GM12878 (cell line): ENCODE measurements at regions of chr5 and their contacts with region 1.

Region 1: GRCh38 chr5:141475625-141476131 is at the start of gene PCDHGC3:
- DNase-seq: peak; percentile 40
- ATAC-seq: peak; percentile 97
- H3K4me3 ChIP-seq: peak within 1 kb of the TSS; percentile 77
- H3K27ac ChIP-seq: no peak within 1 kb of the TSS; the same call in 1 of the 2 replicates
- H3K4me1 ChIP-seq: peaks cover 17% of the 10 kb centered on the region
- H3K27me3 ChIP-seq: no peaks in the 10 kb centered on the region; a peak in 1 of 4 replicates
- CTCF ChIP-seq: peak; percentile 49 to 86 (median 65); a peak in 5 of 6 replicates
- EP300 ChIP-seq: no peak
- POLR2A ChIP-seq: no peak
- RAD21 ChIP-seq: peak; percentile 77
- polyA plus RNA-seq, gene PCDHGC3: 0.53 to 0.60 TPM

Region 2: DNA sequence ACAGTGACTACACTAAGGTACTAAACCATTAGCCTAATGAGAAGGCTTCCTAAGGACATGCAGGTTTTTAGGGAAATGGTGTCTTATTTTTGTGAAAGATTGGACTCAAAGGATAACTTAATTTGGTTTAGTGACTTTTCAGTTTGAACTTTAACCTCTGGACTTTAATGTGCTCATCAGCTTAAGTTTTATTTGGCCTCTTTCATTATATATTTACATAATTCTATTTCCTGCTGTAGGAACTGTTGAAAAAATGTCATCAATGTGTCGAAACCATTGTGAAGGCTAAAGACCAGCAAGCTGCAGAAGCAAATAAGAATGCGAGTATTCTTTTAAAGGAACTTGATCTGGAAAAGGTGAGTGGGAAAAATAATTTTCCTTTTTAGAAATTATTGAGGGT is 962.6 kb before region 1 on chr5:
- CTCF ChIA-PET with region 1: no interaction called
- POLR2A ChIA-PET with region 1: no interaction called
- RAD21 ChIA-PET with region 1: no interaction called
- SMC1A ChIA-PET with region 1: no interaction called
- in situ Hi-C with region 1: no loop called
- intact Hi-C with region 1: no loop called
- DNase-seq: no peak
- ATAC-seq: no peak
- H3K4me3 ChIP-seq: no peak overlapping the region
- H3K27ac ChIP-seq: no peak overlapping the region
- H3K4me1 ChIP-seq: no peaks in the 10 kb centered on the region
- H3K27me3 ChIP-seq: no peaks in the 10 kb centered on the region
- CTCF ChIP-seq: no peak
- EP300 ChIP-seq: no peak
- POLR2A ChIP-seq: no peak
- RAD21 ChIP-seq: no peak

Region 3: DNA sequence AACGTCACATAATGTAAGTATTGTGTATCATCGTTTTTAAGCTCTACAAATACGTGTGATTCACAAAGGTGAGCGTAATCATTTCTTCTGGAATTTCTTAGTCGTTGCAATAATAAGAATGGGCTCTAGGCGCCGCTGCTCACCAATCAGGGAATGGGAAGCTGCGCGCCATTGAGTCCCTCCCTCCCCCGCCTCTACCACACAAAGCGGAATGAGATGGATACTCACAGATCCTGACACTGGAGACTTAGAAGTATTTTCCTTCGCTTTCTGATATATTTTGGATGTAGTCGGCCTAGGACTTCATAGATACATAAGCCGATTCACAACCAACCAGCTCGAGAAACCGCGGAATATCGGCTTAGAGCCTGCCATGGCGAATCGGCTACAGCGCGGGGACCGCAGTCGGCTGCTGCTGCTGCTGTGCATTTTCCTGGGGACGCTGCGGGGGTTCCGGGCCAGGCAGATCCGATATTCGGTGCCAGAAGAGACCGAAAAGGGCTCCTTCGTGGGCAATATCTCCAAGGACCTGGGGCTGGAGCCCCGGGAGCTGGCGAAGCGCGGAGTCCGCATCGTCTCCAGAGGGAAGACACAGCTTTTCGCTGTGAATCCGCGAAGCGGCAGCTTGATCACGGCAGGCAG is 54.7 kb before region 1 on chr5 and contains the start of gene PCDHGA11:
- CTCF ChIA-PET with region 1: interaction called, 31 read pairs
- POLR2A ChIA-PET with region 1: no interaction called
- RAD21 ChIA-PET with region 1: interaction called, 27 read pairs
- SMC1A ChIA-PET with region 1: interaction called, 16 read pairs
- in situ Hi-C with region 1: no loop called
- intact Hi-C with region 1: loop called (anchors 2 kb)
- DNase-seq: peak; percentile 37
- ATAC-seq: peak; percentile 77
- H3K4me3 ChIP-seq: peak within 1 kb of the TSS; percentile 76
- H3K27ac ChIP-seq: no peak within 1 kb of the TSS
- H3K4me1 ChIP-seq: peaks cover 4% of the 10 kb centered on the region; the same call in 1 of the 2 replicates
- H3K27me3 ChIP-seq: no peaks in the 10 kb centered on the region; a peak in 1 of 4 replicates
- CTCF ChIP-seq: peak; percentile 83 to 89 (median 89)
- EP300 ChIP-seq: no peak
- POLR2A ChIP-seq: no peak
- RAD21 ChIP-seq: peak; percentile 82
- polyA plus RNA-seq, gene PCDHGA11: 0.21 to 0.31 TPM

Region 4: DNA sequence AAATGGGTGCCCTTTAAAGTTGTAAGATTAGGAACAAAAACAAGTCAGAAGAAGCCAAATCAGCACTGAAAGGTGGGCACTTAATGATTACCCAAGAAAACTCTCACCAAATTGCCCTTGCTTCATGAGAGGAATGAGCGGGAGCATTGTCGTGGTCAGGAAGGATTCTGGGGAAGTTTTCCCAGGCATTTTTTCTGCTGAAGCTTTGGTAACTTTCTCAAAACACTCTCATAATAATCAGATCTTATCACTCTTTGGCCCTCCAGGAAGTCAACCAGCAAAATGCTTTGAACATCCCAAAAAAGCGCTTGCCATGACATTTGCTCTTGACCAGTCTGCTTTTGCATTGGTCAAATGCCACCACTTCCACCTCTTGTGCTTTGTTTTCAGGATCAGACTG is 10.3 kb before region 1 on chr5:
- CTCF ChIA-PET with region 1: interaction called, 12 read pairs
- POLR2A ChIA-PET with region 1: no interaction called
- RAD21 ChIA-PET with region 1: interaction called, 17 read pairs
- SMC1A ChIA-PET with region 1: interaction called, 19 read pairs
- in situ Hi-C with region 1: no loop called
- intact Hi-C with region 1: no loop called
- DNase-seq: no peak
- ATAC-seq: no peak
- H3K4me3 ChIP-seq: no peak overlapping the region
- H3K27ac ChIP-seq: no peak overlapping the region
- H3K4me1 ChIP-seq: no peaks in the 10 kb centered on the region
- H3K27me3 ChIP-seq: no peaks in the 10 kb centered on the region
- CTCF ChIP-seq: no peak
- EP300 ChIP-seq: no peak
- POLR2A ChIP-seq: no peak
- RAD21 ChIP-seq: no peak

Region 5: GRCh38 chr5:141504216-141504615 is 28.5 kb after region 1 on chr5:
- CTCF ChIA-PET with region 1: interaction called, 213 read pairs
- POLR2A ChIA-PET with region 1: interaction called, 4 read pairs
- RAD21 ChIA-PET with region 1: interaction called, 109 read pairs
- SMC1A ChIA-PET with region 1: interaction called, 117 read pairs
- in situ Hi-C with region 1: no loop called
- intact Hi-C with region 1: no loop called
- DNase-seq: no peak
- ATAC-seq: no peak
- H3K4me3 ChIP-seq: no peak overlapping the region
- H3K27ac ChIP-seq: no peak overlapping the region
- H3K4me1 ChIP-seq: peaks cover 42% of the 10 kb centered on the region
- H3K27me3 ChIP-seq: no peaks in the 10 kb centered on the region
- CTCF ChIP-seq: no peak
- EP300 ChIP-seq: no peak
- POLR2A ChIP-seq: no peak
- RAD21 ChIP-seq: no peak

Region 6: DNA sequence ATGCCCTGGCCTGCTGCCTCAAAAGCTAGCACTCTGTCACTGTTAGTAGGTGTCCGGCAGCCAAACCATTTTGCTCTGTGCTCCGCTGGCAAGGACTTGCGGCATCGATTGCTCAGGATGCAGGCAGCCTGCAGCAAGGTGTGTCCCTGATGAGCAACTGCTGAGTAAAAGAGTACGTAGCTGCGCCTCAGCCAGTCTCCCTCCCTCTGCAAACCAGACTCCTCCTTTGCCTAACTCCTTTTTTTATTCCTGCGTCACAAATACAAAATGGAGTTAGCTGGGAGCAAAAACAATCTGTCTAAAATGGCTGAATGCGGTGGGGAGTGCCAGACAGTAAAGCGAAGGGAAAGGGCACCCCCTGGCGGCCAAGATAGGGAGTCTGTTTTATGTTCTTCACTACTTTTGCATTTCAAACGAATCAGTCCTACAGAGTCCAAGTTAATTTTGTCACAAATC is 82.0 kb after region 1 on chr5:
- CTCF ChIA-PET with region 1: interaction called, 71 read pairs
- POLR2A ChIA-PET with region 1: interaction called, 3 read pairs
- RAD21 ChIA-PET with region 1: interaction called, 51 read pairs
- SMC1A ChIA-PET with region 1: interaction called, 44 read pairs
- in situ Hi-C with region 1: no loop called
- intact Hi-C with region 1: loop called (anchors 2 kb)
- DNase-seq: peak; percentile 43
- ATAC-seq: peak; percentile 96
- H3K4me3 ChIP-seq: no peak overlapping the region
- H3K27ac ChIP-seq: peak overlapping the region; percentile 22; the same call in 1 of the 2 replicates
- H3K4me1 ChIP-seq: no peaks in the 10 kb centered on the region
- H3K27me3 ChIP-seq: no peaks in the 10 kb centered on the region
- CTCF ChIP-seq: peak; percentile 72 to 82 (median 78)
- EP300 ChIP-seq: no peak
- POLR2A ChIP-seq: 0 out of 2 replicates have a peak, but pooled peaks have one; percentile 32
- RAD21 ChIP-seq: peak; percentile 96